Activated naive CD4-positive, alpha-beta T cell treated with anti-CD3 and anti-CD28 coated beads for 36 hours (primary cell): ENCODE measurements at regions of chr10 and their contacts with region 1.

Region 1: DNA sequence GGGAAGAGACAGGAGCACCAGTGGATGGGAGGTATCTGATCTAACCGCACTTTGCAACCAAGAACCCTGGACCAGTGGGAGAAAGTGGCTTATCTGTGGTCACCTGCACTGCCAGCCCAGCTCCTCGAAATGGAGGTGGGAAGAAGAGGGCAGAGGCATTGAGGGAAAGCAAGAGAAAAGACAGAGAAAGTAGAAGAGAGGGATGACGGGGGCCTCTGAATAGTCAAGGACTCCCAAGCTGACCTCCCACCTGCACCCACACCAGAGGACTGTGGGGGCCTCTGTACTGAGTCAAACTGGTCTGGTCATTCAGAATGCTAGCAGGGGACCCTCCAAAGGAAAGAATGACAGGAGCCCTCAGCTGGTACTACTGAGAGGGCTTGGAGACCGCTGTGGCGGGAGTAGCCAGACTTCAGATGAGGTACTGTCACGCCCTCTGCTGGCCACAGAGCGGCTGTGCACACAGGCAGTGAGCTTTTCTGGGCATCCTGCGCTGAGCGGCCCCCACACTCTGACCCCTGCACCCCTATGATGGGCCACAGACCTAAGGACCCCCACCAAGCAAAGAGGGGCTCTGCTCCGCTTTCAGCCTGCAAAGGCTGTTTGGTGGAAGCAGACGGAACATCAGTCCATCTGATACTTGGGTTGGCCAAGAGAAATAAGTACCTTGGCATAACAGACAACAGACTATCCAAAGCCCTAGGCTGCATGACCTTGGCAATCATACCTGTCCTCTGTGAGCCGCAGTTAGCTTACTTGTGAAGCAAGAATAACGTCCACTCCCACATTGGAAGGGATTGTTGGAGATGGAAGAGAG is 112.9 kb downstream of the COL13A1 start:
- DNase-seq: peak; percentile 79
- H3K4me3 Mint-ChIP-seq: no peak overlapping the region
- H3K27ac Mint-ChIP-seq: no peak overlapping the region
- H3K4me1 Mint-ChIP-seq: no peaks in the 10 kb centered on the region
- H3K27me3 Mint-ChIP-seq: peaks cover 5% of the 10 kb centered on the region

Region 2: GRCh38 chr10:69644658-69645295 is 269.8 kb before region 1 on chr10:
- CTCF ChIA-PET with region 1: interaction called, 8 read pairs
- intact Hi-C with region 1: loop called (anchors 1 kb)
- DNase-seq: peak; percentile 63
- H3K4me3 Mint-ChIP-seq: no peak overlapping the region
- H3K27ac Mint-ChIP-seq: no peak overlapping the region
- H3K4me1 Mint-ChIP-seq: no peaks in the 10 kb centered on the region
- H3K27me3 Mint-ChIP-seq: peaks cover 1% of the 10 kb centered on the region

Region 3: DNA sequence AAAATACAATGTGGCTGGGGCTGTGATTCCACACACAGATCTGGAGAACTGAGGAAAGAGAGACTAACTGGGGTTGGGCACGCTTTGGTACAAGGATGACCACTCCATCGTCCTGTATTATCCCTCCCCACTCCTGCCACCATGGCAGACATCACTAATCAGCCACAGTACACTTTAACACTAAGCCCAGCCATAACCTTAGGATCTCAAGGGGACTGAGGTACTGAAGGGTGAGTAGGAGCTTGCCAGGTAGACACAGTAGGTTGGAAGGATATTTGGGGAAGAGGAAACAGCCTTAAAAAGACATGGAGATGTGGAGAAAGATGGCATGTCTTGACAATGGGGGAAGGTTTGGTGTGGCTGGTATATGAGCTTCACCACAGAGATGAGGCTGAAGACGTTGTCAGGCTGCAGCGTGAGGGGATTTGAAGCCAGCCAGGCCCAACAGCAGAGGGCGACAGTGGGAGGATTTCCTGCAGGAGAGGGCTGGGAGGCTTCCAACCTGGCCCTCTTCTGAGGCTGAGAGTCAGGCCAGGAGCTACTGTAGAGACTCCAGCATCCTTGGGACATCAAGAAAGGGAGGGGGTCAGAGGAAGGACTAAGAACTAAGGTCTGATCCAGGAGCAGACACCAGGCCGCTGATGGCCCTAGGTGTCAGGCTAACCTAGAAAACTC is 171.5 kb before region 1 on chr10:
- CTCF ChIA-PET with region 1: interaction called, 4 read pairs
- intact Hi-C with region 1: loop called (anchors 2 kb)
- DNase-seq: peak; percentile 52
- H3K4me3 Mint-ChIP-seq: no peak overlapping the region
- H3K27ac Mint-ChIP-seq: no peak overlapping the region
- H3K4me1 Mint-ChIP-seq: peaks cover 1% of the 10 kb centered on the region
- H3K27me3 Mint-ChIP-seq: peaks cover 3% of the 10 kb centered on the region

Region 4: GRCh38 chr10:69800109-69800508 is 114.5 kb before region 1 on chr10:
- CTCF ChIA-PET with region 1: interaction called, 7 read pairs
- intact Hi-C with region 1: loop called (anchors 5 kb)
- DNase-seq: peak; percentile 37
- H3K4me3 Mint-ChIP-seq: no peak overlapping the region
- H3K27ac Mint-ChIP-seq: no peak overlapping the region
- H3K4me1 Mint-ChIP-seq: peaks cover 9% of the 10 kb centered on the region
- H3K27me3 Mint-ChIP-seq: peaks cover 41% of the 10 kb centered on the region